ENCODE measurements at regions of chr1 and their contacts with region 1.

Region 1: DNA sequence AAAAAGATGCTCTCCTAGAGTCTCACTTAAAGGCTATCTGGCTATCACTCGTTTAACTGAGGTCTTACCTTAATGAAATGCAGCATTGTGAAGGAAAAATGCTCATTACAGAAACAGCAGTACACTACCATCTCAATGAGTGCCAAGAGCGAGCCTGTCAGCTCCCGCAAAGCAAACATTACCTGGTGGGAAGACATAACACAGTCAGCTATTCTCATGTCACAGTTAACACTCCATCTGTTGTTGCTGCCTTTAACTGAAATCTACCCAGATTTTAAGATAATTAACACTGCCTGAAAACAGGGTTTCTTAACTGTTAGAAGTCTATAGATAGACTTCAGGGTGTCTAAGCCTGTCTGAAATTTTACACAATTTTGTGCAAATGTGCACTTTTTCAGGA is 39.1 kb downstream of the PCSK9 start:
- DNase-seq: no peak
- ATAC-seq: no peak

Region 2: GRCh38 chr1:55107101-55107500 is 28.6 kb after region 1 on chr1:
- intact Hi-C with region 1: loop called (anchors 5 kb)
- DNase-seq: no peak
- ATAC-seq: no peak

Region 3: DNA sequence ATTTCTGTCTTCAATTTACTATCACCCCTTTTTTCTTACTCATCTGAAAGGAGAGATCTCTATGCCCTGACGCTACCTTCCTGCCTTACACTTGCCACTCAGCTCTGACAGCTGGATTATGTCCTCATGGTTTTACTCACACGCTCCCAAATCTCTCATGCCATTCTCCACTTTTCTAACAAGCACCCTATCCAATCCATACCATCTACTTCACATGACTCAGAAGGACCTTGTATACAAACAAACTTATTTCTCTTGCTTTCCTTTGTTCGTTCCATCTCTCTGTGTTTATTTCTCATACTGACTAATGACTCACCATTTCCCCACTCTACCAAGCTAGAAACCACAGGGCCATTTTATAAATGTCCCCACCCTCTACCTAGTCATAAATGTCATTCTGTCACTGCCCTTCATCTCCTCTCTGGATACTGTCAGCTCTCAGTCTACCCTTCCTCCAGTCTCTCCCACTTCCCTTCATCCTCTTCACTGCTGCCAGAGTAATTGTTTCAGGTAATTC is 49.4 kb after region 1 on chr1:
- intact Hi-C with region 1: no loop called
- DNase-seq: no peak
- ATAC-seq: no peak